Left cardiac atrium (tissue), 4 donors: ENCODE measurements at regions of chr21 and their contacts with region 1.

Region 1: DNA sequence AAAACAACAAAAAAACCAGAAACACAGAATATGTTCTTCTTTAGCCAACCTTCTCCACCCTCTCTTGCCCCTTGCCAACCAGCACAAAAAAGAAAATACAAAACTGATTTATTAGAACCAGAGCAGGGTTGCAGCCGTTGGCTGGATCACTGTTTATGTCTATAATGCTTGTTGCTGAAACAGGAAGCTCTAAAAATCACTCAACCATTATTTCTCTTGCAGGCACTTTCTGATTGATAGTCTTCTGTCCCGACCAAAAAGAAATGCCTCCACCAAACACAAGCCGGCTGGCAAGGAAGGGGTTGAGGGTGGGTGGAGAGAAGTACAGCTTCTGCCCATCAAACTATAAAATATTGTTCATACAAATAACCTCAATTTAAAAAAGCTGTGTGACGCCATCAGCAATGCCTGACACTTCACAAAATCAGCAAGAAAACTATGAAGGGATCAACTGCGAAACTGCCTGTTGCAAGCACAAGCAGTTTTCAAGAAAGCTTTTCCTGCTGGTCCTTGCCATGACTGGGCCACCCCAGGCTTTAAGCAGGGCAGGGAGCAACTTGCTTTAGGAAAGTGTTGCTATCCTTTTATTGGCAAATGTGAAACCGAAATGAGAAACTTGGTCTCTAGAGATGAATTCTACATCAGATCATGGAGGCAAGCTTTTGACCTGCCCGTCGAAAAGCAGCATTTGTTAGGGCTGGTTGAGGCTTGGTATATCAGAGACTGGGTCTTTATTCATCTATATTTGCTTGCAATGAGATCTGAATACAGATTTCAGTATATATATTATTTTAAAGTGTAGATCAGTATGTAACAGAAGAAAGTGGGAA is 174.2 kb downstream of the RUNX1 start:
- DNase-seq: no peak
- ATAC-seq: peak in 1 of 2 donors; percentile 50

Region 2: GRCh38 chr21:34795175-34795547 is 79.7 kb before region 1 on chr21:
- intact Hi-C with region 1: loop called in 1 of 2 experiments (anchors 10 kb)
- DNase-seq: no peak
- ATAC-seq: peak; percentile 36 to 67